CD8-positive, alpha-beta T cell (primary cell): ENCODE measurements at regions of chr5 and their contacts with region 1.

Region 1: DNA sequence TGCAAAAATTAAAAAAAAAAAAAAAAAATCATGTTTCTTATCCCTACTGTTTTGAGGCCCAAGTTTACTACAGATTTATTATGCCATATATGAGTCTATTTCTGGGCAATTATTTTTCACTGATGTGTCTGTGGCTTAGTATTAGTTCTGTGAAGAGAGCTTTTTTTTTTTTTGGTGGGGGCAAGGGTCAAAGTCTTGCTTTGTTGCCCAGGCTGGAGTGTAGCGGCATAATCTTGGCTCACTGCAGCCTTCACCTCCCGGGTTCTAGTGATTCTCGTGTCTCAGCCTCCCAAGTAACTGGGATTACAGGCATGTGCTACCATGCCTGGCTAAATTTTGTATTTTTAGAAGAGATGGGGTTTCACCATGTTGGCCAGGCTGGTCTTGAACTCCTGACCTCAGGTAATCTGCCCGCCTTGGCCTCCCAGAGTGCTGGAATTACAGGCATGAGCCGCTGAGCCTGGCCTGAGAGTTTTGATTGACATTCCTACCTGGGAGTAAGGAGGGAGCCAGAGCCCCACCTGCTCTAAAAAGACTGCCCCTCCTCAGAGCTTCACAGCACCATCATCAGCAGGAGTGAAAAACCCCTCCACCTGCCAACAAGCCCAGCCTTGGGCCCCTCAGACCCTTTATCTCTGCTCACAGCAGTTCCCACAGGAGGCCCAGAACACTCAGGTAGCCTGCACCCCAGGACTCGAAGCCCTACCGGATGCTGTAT is 36.1 kb upstream of the JADE2 start:
- DNase-seq: no peak
- ATAC-seq: no peak
- H3K4me3 ChIP-seq: no peak overlapping the region
- H3K4me3 Mint-ChIP-seq: no peak overlapping the region
- H3K27ac ChIP-seq: no peak overlapping the region
- H3K27ac Mint-ChIP-seq: no peak overlapping the region
- H3K4me1 ChIP-seq: no peaks in the 10 kb centered on the region
- H3K4me1 Mint-ChIP-seq: no peaks in the 10 kb centered on the region
- H3K27me3 ChIP-seq: no peaks in the 10 kb centered on the region
- H3K27me3 Mint-ChIP-seq: no peaks in the 10 kb centered on the region
- CTCF ChIP-seq: no peak

Region 2: DNA sequence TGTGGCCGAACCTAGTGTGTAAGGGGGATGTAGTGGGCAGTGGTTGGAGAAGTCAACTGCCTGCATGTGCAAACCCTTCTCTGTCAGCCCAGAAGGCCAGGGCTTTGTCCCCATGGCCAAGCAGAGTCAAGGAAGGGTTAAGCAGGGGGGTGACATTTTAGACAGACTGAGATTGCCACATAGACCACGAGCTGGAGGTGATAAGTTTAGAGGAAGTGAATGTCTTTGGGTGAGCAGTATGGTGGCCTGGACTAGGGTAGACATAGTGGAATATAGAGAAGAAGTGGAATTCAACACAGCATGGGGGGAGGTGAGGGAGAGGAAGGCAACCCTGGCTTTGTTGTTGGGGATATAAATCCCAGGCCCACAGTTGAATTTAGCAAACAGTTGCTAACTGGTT is 39.0 kb before region 1 on chr5:
- CTCF ChIA-PET with region 1: no interaction called
- POLR2A ChIA-PET with region 1: no interaction called
- intact Hi-C with region 1: loop called in 1 of 2 experiments (anchors 1 kb)
- DNase-seq: no peak
- ATAC-seq: no peak
- H3K4me3 ChIP-seq: no peak overlapping the region
- H3K4me3 Mint-ChIP-seq: no peak overlapping the region
- H3K27ac ChIP-seq: no peak overlapping the region
- H3K27ac Mint-ChIP-seq: no peak overlapping the region
- H3K4me1 ChIP-seq: no peaks in the 10 kb centered on the region
- H3K4me1 Mint-ChIP-seq: no peaks in the 10 kb centered on the region
- H3K27me3 ChIP-seq: no peaks in the 10 kb centered on the region
- H3K27me3 Mint-ChIP-seq: no peaks in the 10 kb centered on the region
- CTCF ChIP-seq: no peak